ENCODE measurements at regions of chrX and their contacts with region 1.

Region 1: DNA sequence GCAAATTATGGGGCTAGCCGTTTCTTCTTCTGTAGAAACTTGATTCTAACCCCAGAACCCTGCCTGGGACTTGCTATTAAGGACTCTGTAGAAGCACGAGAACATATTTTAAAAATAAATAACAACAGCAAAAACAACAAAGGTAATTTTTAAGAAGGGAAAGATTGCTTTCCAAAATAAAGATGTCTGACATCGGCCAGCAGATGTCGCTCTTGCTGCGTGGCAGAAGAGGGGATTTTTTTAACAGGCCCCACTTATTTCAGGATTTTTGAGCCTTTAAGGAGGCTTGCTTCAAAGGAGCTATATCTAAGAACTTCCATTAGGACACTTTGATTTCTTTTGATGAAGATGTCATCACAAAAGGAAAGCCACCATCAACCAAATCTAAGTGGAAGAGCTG is 62.8 kb upstream of the EGFL6 start:
- DNase-seq: peak; percentile 30 to 32
- H3K4me3 ChIP-seq: no peak overlapping the region
- H3K4me3 Mint-ChIP-seq: no peak overlapping the region
- H3K27ac Mint-ChIP-seq: no peak overlapping the region
- H3K4me1 ChIP-seq: no peaks in the 10 kb centered on the region
- H3K4me1 Mint-ChIP-seq: no peaks in the 10 kb centered on the region
- H3K27me3 ChIP-seq: no peaks in the 10 kb centered on the region
- H3K27me3 Mint-ChIP-seq: peaks cover 3% of the 10 kb centered on the region
- CTCF ChIP-seq: peak; percentile 57 to 61

Region 2: GRCh38 chrX:13428055-13428786 is 78.4 kb before region 1 on chrX:
- CTCF ChIA-PET with region 1: no interaction called
- POLR2A ChIA-PET with region 1: no interaction called
- intact Hi-C with region 1: no loop called
- DNase-seq: no peak
- H3K4me3 ChIP-seq: no peak overlapping the region
- H3K4me3 Mint-ChIP-seq: no peak overlapping the region
- H3K27ac Mint-ChIP-seq: no peak overlapping the region
- H3K4me1 ChIP-seq: no peaks in the 10 kb centered on the region
- H3K4me1 Mint-ChIP-seq: no peaks in the 10 kb centered on the region
- H3K27me3 ChIP-seq: no peaks in the 10 kb centered on the region
- H3K27me3 Mint-ChIP-seq: no peaks in the 10 kb centered on the region
- CTCF ChIP-seq: no peak

Region 3: GRCh38 chrX:13646154-13646549 is 139.6 kb after region 1 on chrX:
- CTCF ChIA-PET with region 1: interaction called, 26 read pairs
- POLR2A ChIA-PET with region 1: no interaction called
- intact Hi-C with region 1: loop called (anchors 1 kb)
- DNase-seq: peak; percentile 44 to 63
- H3K4me3 ChIP-seq: no peak overlapping the region
- H3K4me3 Mint-ChIP-seq: no peak overlapping the region
- H3K27ac Mint-ChIP-seq: no peak overlapping the region
- H3K4me1 ChIP-seq: no peaks in the 10 kb centered on the region
- H3K4me1 Mint-ChIP-seq: peaks cover 6% of the 10 kb centered on the region
- H3K27me3 ChIP-seq: no peaks in the 10 kb centered on the region
- H3K27me3 Mint-ChIP-seq: no peaks in the 10 kb centered on the region
- CTCF ChIP-seq: peak; percentile 48 to 61

Region 4: GRCh38 chrX:13750204-13750603 is 243.6 kb after region 1 on chrX:
- CTCF ChIA-PET with region 1: no interaction called
- POLR2A ChIA-PET with region 1: no interaction called
- intact Hi-C with region 1: loop called (anchors 5 kb)
- DNase-seq: peak in 1 of 2 experiments; percentile 39
- H3K4me3 ChIP-seq: no peak overlapping the region
- H3K4me3 Mint-ChIP-seq: no peak overlapping the region
- H3K27ac Mint-ChIP-seq: no peak overlapping the region
- H3K4me1 ChIP-seq: peaks cover 24% of the 10 kb centered on the region
- H3K4me1 Mint-ChIP-seq: peaks cover 17% of the 10 kb centered on the region
- H3K27me3 ChIP-seq: no peaks in the 10 kb centered on the region
- H3K27me3 Mint-ChIP-seq: no peaks in the 10 kb centered on the region
- CTCF ChIP-seq: peak; percentile 41 to 52

Region 5: GRCh38 chrX:13837290-13837745 is 330.7 kb after region 1 on chrX:
- CTCF ChIA-PET with region 1: no interaction called
- POLR2A ChIA-PET with region 1: no interaction called
- intact Hi-C with region 1: no loop called
- DNase-seq: no peak
- H3K4me3 ChIP-seq: no peak overlapping the region
- H3K4me3 Mint-ChIP-seq: no peak overlapping the region
- H3K27ac Mint-ChIP-seq: no peak overlapping the region
- H3K4me1 ChIP-seq: no peaks in the 10 kb centered on the region
- H3K4me1 Mint-ChIP-seq: no peaks in the 10 kb centered on the region
- H3K27me3 ChIP-seq: no peaks in the 10 kb centered on the region
- H3K27me3 Mint-ChIP-seq: peaks cover 9% of the 10 kb centered on the region
- CTCF ChIP-seq: no peak

Measured in Caco-2 (cell line).